Activated CD4-positive, alpha-beta T cell treated with anti-CD3 and anti-CD28 coated beads for 36 hours (primary cell): ENCODE measurements at regions of chr18 and their contacts with region 1.

Region 1: DNA sequence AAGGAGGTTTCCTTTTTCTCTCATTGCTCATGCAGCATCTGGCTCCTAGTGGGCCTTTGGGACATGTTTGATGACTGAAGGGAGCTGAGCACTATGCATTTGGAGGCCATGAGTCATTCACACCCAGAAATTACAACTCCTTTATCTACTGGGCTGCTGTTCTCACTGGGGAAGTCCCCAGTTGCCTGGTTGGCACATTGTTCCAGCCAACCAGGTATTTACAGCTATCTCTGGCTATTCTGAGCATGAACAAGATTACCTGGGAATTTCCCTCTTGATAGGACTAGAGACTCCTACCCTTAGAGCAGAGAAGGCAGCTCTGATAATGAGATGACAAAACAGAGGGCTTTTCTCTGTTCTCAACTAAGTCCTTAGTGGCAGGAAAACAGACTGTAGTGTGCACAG is 206.5 kb downstream of the SETBP1 start:
- DNase-seq: peak; percentile 74
- ATAC-seq: peak; percentile 98
- H3K4me3 Mint-ChIP-seq: peak overlapping the region; percentile 11
- H3K27ac Mint-ChIP-seq: peak overlapping the region; percentile 96
- H3K4me1 Mint-ChIP-seq: peaks cover 30% of the 10 kb centered on the region
- H3K27me3 Mint-ChIP-seq: peaks cover 3% of the 10 kb centered on the region

Region 2: DNA sequence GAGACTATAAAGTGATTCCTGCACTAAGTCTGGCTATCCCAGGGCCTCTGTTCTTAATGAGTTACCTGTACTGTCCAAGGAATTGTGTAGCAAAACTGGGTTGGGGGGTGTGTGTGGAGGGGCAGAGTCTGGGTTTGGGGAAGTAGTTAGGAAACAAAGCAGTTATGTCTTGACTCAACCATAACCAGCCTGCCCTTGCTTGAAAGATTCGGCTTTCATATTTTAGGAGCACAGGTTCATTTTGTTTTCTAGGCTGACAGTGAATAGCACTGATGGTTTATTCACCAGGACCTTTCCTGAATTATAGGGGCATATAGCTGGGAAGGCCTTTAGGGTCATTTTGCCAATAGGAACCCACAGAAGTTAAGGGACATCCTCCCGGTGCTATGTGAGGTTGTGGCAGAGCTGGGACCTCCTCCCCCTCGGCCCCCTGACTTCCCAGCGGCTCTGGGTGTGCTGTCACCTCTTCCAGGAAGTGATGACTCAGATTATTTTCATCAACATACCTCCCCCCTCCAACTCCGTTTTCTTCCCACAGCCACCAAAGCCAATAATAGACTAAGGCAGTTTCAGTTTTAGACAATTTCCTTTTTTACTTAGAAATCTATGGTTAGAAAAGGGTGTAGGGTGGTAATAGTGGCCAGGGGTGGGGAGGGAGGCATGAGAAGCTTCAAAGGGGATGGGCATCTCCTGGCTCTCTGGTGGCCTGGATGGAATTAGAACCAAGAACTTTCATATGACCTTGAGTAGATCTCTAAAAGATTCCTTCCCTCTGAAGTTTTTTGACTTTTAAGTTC is 161.7 kb before region 1 on chr18:
- CTCF ChIA-PET with region 1: interaction called, 4 read pairs
- POLR2A ChIA-PET with region 1: interaction called, 5 read pairs
- intact Hi-C with region 1: loop called (anchors 1 to 2 kb)
- DNase-seq: peak; percentile 81
- ATAC-seq: peak; percentile 78
- H3K4me3 Mint-ChIP-seq: peak overlapping the region; percentile 17
- H3K27ac Mint-ChIP-seq: peak overlapping the region; percentile 80
- H3K4me1 Mint-ChIP-seq: peaks cover 80% of the 10 kb centered on the region
- H3K27me3 Mint-ChIP-seq: peaks cover 2% of the 10 kb centered on the region

Region 3: GRCh38 chr18:44819944-44820510 is 67.2 kb before region 1 on chr18:
- CTCF ChIA-PET with region 1: no interaction called
- POLR2A ChIA-PET with region 1: interaction called, 3 read pairs
- intact Hi-C with region 1: loop called (anchors 1 to 2 kb)
- DNase-seq: no peak
- ATAC-seq: no peak
- H3K4me3 Mint-ChIP-seq: no peak overlapping the region
- H3K27ac Mint-ChIP-seq: no peak overlapping the region
- H3K4me1 Mint-ChIP-seq: peaks cover 28% of the 10 kb centered on the region
- H3K27me3 Mint-ChIP-seq: peaks cover 23% of the 10 kb centered on the region

Region 4: GRCh38 chr18:44826418-44827259 is 60.6 kb before region 1 on chr18:
- CTCF ChIA-PET with region 1: interaction called, 3 read pairs
- POLR2A ChIA-PET with region 1: interaction called, 3 read pairs
- intact Hi-C with region 1: loop called in 1 of 2 experiments (anchors 2 kb)
- DNase-seq: no peak
- ATAC-seq: no peak
- H3K4me3 Mint-ChIP-seq: no peak overlapping the region
- H3K27ac Mint-ChIP-seq: no peak overlapping the region
- H3K4me1 Mint-ChIP-seq: peaks cover 10% of the 10 kb centered on the region
- H3K27me3 Mint-ChIP-seq: peaks cover 15% of the 10 kb centered on the region

Region 5: DNA sequence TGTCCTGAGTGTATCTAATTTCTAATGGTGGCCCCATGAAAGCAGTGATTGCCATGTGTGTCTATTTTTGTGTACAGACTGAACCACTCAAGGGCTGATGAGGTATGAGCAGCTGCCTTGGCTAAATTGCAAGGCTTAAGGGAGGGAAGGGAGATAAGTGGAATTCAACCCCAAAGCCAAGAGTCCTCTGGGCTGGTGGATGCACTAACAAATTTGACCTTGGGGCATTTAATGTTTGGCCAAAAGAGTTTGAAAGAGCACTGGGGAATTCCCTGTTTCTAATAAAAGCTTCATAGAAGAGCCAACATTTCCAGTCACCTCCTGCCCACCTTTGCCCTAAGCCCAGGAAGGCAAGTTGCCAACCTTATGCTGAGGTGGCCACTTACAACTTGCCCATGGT is 34.4 kb before region 1 on chr18:
- CTCF ChIA-PET with region 1: no interaction called
- POLR2A ChIA-PET with region 1: no interaction called
- intact Hi-C with region 1: no loop called
- DNase-seq: no peak
- ATAC-seq: no peak
- H3K4me3 Mint-ChIP-seq: no peak overlapping the region
- H3K27ac Mint-ChIP-seq: no peak overlapping the region
- H3K4me1 Mint-ChIP-seq: no peaks in the 10 kb centered on the region
- H3K27me3 Mint-ChIP-seq: peaks cover 6% of the 10 kb centered on the region

Region 6: GRCh38 chr18:44927127-44927849 is 40.1 kb after region 1 on chr18:
- CTCF ChIA-PET with region 1: no interaction called
- POLR2A ChIA-PET with region 1: no interaction called
- intact Hi-C with region 1: loop called in 1 of 2 experiments (anchors 1 kb)
- DNase-seq: peak; percentile 39
- ATAC-seq: peak; percentile 78
- H3K4me3 Mint-ChIP-seq: no peak overlapping the region
- H3K27ac Mint-ChIP-seq: no peak overlapping the region
- H3K4me1 Mint-ChIP-seq: peaks cover 4% of the 10 kb centered on the region
- H3K27me3 Mint-ChIP-seq: peaks cover 4% of the 10 kb centered on the region

Region 7: DNA sequence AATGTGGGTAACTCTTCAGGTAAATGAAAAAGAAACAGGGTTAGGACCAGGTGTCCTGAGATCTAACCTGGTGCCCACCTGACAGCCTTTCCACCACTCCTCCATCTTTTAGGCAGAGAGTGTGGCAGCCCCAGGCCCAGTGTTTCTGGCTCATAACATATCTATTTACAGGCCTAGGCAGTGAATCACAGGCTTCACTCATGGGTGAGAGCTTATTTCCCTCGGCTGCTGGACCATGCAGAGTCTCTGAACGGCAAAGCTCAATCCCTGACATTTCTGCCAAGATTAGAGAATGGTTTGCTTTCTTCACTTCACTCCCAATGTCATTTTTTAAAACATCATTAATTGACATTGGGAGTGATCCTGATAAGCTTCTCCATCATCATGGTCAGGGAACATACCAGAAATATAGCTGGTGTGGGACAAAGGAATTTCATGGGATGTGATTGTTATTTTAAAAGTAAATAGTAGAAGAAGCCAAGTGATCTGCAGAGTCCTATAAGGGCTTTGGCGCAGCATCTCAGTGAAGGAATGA is 117.4 kb after region 1 on chr18:
- CTCF ChIA-PET with region 1: no interaction called
- POLR2A ChIA-PET with region 1: no interaction called
- intact Hi-C with region 1: no loop called
- DNase-seq: no peak
- ATAC-seq: no peak
- H3K4me3 Mint-ChIP-seq: no peak overlapping the region
- H3K27ac Mint-ChIP-seq: no peak overlapping the region
- H3K4me1 Mint-ChIP-seq: peaks cover 8% of the 10 kb centered on the region
- H3K27me3 Mint-ChIP-seq: no peaks in the 10 kb centered on the region

Region 8: DNA sequence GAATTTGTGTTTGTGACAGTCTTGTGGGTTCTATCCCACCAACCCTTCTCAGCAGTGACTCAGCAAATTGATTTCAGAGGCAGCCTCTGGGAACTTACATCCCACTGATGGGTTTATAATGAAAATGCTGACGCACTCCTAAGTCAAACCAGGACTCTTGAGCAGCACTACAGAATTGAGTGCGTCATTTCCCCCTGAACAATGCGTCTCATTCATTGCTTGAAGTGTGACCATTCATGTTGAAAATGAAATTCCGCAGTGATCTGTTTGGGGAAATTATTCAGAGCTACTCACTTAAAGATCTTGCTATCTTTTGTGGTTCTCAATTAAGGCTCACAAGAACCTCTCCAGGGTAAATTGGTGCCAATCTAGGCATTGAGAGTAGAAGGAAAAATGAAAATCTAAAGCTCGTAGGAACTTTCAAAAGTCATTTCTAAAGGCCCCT is 310.3 kb after region 1 on chr18:
- CTCF ChIA-PET with region 1: no interaction called
- POLR2A ChIA-PET with region 1: no interaction called
- intact Hi-C with region 1: loop called (anchors 5 to 10 kb)
- DNase-seq: peak; percentile 47
- ATAC-seq: peak; percentile 95
- H3K4me3 Mint-ChIP-seq: no peak overlapping the region
- H3K27ac Mint-ChIP-seq: no peak overlapping the region
- H3K4me1 Mint-ChIP-seq: peaks cover 3% of the 10 kb centered on the region
- H3K27me3 Mint-ChIP-seq: peaks cover 14% of the 10 kb centered on the region